Head of caudate nucleus (tissue), 42 donors: ENCODE measurements at regions of chr15 and their contacts with region 1.

Region 1: DNA sequence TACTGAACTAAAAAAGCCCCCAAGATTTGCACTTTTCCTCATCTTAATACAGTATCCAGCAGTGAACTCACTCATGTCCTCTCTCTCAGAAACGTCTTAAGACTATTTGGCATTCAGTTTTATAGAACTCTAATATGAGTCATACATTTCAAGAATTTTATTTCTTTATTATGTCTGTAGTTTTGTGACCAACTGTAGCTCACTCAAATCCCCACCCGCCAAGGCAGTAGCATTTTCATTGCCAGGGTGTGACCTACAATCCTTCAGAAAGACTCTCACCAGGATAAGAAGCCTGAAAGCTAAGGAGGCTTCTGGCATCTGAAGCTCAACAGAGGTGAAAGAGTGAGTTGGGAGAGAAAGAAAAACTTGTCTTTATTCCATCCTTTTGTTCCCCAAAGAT is 537.1 kb downstream of the RSL24D1 start:
- DNase-seq: no peak

Region 2: GRCh38 chr15:54502416-54503075 is 157.1 kb before region 1 on chr15:
- intact Hi-C with region 1: no loop called
- DNase-seq: peak in 8 of 42 donors; percentile 7 to 62 (median 24)

Region 3: DNA sequence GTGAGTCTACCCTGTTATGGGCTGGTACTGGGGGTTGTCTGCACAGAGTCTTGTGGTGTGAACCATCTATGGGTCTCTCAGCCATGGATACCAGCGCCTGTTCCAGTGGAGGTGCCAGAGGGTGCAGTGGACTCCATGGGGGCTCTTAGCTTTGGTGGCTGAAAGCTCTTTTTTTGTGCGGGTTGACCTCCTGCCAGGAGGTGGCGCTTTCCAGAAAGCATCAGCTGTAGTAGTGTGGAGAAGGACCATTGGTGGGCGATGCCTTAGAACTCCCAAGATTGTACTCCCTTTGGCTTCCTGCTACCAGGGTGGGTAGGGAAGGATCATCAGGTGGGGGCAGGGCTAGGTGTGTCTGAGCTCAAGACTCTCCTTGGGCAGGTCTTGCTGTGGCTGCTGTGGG is 65.5 kb before region 1 on chr15:
- intact Hi-C with region 1: loop called (anchors 10 kb)
- DNase-seq: no peak

Region 4: GRCh38 chr15:54810031-54810430 is 150.4 kb after region 1 on chr15:
- intact Hi-C with region 1: no loop called
- DNase-seq: no peak

Region 5: DNA sequence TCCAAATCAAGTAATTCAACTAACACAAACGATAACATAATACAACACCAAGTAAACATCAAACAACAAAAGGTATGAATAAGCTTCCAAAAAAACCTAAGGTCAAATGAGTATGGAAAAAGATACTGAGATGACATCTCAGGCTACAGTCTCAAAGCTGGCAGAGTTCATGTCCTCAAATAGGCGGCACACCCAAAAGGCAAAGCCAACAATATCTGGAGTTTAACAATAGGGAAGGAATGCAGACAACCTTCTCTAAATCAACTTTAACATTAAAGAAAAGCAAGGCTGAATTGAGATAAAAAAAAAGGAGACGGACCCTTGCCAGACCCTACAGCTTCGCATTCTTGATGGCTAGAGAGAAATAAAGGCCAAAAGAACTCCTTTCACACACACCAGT is 190.5 kb after region 1 on chr15:
- intact Hi-C with region 1: no loop called
- DNase-seq: no peak